ENCODE measurements at regions of chr18 and their contacts with region 1.

Region 1: GRCh38 chr18:3839481-3840075 is 389.6 kb downstream of the TGIF1 start:
- DNase-seq: no peak
- ATAC-seq: no peak

Region 2: GRCh38 chr18:3794537-3795348 is 44.8 kb before region 1 on chr18:
- intact Hi-C with region 1: no loop called
- DNase-seq: no peak
- ATAC-seq: no peak

Region 3: DNA sequence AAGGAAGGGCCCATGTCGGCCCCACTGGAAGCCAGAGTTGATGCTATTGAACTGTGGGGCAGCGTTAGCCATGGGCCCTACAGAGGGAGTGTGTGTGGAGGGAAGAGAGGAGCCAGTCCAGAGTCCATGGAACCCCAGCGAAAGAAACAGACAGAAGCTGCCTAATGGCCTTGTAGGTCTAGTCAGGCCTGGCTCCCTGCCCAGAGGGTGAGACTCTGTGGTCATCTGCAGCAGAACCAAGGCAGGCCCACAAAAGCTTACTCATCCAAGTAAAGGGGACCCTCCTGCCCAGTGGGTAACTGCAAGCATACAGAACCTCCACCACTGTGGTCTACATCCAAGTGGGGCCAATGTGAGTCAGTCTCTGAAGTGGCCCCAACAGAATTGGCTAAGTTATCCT is 50.2 kb after region 1 on chr18:
- intact Hi-C with region 1: loop called in 1 of 2 experiments (anchors 10 kb)
- DNase-seq: no peak
- ATAC-seq: no peak

Region 4: GRCh38 chr18:3966985-3967856 is 127.6 kb after region 1 on chr18:
- intact Hi-C with region 1: no loop called
- DNase-seq: no peak
- ATAC-seq: no peak